OCI-LY7 (cell line): ENCODE measurements at regions of chr11 and their contacts with region 1.

Region 1: DNA sequence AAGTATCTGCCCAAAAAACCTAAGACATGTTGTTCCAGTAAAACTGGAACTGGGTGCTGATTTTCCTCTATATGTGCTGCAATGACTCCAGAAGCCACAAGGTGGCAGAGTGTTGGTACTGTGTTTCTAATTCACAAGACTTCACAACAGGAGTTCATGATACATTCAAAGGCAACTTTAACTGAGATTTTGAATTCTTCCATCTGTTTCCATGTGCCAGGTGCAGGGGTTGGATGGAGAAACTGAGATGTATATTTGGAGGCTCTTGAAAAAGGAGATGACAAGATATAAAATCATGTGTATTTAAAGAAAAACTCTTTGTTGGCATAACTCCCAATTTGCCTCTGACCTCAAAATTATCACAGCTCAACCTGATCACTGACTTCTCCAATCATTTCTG is 1098.6 kb upstream of the CCDC90B start:
- DNase-seq: peak; percentile 53
- H3K4me3 ChIP-seq: no peak overlapping the region
- H3K27ac ChIP-seq: no peak overlapping the region
- H3K4me1 ChIP-seq: no peaks in the 10 kb centered on the region
- CTCF ChIP-seq: peak; percentile 88

Region 2: DNA sequence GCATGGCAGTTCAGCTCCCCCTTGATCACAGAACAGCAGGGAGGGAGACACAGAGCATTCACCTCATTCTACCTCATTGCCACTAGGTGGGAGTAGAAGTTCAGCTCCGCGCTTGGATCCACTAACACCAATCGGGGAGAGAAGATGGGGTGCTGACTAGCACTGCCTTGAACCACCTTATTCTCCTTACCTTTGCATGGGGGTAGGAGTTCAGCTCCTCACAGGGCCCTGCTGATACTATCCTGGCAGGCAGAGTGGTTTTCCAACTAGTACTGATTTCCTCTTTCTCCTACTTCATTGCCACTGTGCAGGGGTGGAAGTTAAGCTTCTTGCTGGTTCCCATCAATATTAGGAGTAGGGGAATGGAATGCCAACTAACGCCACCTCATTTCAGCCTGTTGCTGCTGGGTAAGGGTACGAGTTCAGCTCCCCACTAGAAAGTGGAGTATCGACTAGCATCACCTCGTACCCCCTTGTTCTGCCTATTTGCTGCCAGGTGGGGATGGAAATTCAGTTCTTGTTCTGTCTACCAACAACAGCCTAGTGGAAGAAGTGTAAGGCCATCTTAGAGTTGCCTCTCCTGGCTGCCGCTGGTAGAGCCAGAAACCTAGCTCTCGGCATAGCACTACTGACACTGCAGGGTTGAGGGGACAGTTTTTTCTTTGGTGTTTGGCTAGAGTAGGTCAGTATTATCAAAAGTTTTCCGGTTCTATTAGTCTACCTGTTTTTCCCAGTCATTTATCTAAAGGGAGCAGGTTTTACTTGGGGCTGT is 547.7 kb before region 1 on chr11:
- CTCF ChIA-PET with region 1: no interaction called
- POLR2A ChIA-PET with region 1: no interaction called
- intact Hi-C with region 1: loop called (anchors 10 kb)
- DNase-seq: peak; percentile 41
- H3K4me3 ChIP-seq: no peak overlapping the region
- H3K27ac ChIP-seq: no peak overlapping the region
- H3K4me1 ChIP-seq: no peaks in the 10 kb centered on the region
- CTCF ChIP-seq: peak; percentile 77

Region 3: DNA sequence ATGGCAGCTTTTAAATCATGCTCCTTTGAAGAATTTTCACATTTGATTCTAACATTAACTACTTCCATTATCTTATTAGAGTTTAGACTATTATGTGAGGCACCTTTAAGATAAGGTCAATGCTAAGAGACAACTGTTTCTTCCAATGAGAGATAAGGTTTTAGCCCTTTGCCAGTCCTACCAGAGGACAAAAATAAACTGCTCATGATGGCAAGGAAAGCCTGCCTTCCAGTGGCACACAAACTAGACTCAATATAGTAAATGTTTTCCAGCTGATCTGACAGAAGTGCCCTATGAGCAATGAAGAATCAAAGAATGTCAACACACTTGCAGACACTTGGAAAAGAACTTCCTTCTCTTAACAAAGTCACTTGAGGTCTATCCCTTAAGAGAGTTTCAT is 53.8 kb after region 1 on chr11:
- CTCF ChIA-PET with region 1: no interaction called
- POLR2A ChIA-PET with region 1: no interaction called
- intact Hi-C with region 1: no loop called
- DNase-seq: no peak
- H3K4me3 ChIP-seq: no peak overlapping the region
- H3K27ac ChIP-seq: no peak overlapping the region
- H3K4me1 ChIP-seq: no peaks in the 10 kb centered on the region
- CTCF ChIP-seq: no peak

Region 4: DNA sequence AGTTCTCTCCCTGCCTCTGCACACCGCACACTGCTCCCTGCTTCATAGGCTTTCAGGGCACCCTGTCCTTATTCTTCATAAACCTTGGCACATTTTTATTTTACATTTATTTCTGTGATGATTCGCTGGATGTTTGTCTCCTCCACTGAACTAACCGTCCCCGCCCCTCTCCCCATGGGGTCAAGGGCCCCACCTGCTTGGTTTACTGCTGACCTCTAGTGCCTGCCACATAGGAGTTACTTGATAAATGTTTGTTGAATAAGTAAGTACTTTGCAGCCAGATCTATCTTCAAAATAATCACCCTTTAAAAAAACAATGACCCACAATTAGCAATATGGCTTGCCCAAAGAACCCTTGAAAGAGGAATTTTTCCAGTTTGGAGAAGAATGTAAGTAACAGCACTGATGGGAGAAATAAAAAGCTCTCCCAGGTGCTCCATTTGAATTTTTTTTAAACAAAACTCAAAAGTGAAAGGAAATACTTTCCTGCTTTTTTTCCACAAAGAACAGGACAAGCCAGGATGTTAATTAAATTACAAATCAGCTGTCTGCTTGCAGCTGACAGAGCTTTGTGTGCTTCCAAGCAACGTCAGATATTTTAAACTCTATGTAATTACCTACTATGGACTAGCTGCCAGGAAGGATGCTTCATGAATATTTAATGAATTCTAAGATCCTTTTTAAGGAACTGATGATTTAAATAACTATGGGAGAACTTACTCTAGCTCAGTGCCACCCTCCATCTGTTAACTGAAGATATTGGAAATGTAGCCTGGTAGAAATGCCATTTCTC is 158.8 kb after region 1 on chr11:
- CTCF ChIA-PET with region 1: no interaction called
- POLR2A ChIA-PET with region 1: interaction called, 4 read pairs
- intact Hi-C with region 1: loop called (anchors 5 kb)
- DNase-seq: peak; percentile 45
- H3K4me3 ChIP-seq: no peak overlapping the region
- H3K27ac ChIP-seq: no peak overlapping the region
- H3K4me1 ChIP-seq: peaks cover 29% of the 10 kb centered on the region
- CTCF ChIP-seq: peak; percentile 67

Region 5: DNA sequence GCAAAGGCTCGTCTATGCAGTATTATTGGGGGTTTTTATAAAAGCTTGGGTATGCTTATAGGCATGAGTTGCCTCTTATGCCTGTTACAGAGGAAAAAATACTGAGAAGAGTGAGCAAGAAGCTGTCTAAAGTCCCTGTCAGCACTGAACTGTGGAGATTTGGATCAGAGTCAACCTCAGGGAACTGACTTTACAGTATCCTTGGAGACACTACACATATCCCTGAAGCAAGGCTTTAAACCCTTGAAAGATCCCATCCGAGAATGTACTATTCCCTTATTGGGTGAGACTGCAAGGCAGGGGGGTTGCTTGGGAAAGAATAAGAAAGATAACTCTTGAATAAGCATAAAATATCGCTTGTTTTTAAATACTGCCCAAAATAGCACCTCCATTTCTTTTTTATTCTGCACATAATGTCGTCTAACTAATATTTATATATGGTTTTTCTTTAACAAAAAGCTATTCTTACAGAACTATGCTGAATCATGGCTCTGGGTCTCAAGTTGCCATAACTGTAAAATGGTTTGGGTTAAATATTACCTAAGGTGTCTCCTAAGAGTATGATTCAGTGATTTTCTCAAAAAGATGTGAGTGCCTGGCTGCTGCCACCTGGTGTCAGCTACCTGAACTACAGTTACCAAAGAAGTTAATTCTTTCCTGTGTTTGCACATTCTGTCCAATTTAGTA is 179.6 kb after region 1 on chr11:
- CTCF ChIA-PET with region 1: no interaction called
- POLR2A ChIA-PET with region 1: no interaction called
- intact Hi-C with region 1: loop called (anchors 2 kb)
- DNase-seq: peak; percentile 69
- H3K4me3 ChIP-seq: no peak overlapping the region
- H3K27ac ChIP-seq: no peak overlapping the region
- H3K4me1 ChIP-seq: peaks cover 35% of the 10 kb centered on the region
- CTCF ChIP-seq: peak; percentile 97